Dorsolateral prefrontal cortex (tissue), 120 donors: ENCODE measurements at regions of chr1 and their contacts with region 1.

Region 1: GRCh38 chr1:212070720-212071302 is 35.3 kb downstream of the DTL start:
- DNase-seq: no peak
- H3K4me3 ChIP-seq: no peak overlapping the region
- H3K27ac ChIP-seq: no peak overlapping the region
- H3K27me3 ChIP-seq: no peaks in the 10 kb centered on the region
- CTCF ChIP-seq: peak; percentile 67 to 96 (median 82)

Region 2: DNA sequence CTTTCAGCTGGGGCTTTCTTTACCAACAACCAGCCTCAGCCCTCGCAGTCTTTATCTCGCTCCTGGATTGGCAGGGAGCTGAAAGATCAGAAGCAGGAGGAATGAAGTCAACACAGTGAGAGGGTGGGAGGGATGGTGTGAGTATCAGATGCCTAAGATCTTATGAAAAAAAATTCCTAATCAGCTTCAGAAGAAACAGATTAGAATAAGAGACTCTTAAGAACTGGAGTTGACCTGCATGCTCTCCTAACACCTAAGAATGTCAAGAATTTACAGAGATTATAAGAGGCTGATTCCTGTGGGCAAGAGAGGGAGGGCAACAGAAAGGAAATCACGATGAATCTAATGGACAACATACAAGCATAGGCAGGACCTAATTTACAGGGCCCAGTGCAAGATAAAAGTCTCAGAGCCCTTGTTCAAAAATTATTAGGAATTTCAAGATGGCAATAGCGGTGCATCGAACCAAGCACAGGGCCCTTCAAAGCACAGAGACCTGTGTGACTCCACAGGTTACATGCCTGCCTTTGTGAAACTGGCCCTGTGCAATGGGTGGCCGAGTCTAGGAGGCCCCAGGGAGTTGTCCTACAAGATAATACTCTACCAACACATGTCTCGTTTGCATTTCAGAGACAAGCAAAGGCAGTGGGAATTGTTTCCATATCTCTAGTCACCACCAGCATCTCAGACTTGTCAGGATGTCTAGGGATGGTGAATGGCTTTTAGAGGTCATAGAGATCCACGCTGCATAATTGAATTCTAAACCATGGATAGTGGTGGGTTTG is 149.1 kb after region 1 on chr1:
- intact Hi-C with region 1: no loop called
- DNase-seq: no peak
- H3K4me3 ChIP-seq: no peak overlapping the region
- H3K27ac ChIP-seq: no peak overlapping the region
- H3K27me3 ChIP-seq: no peaks in the 10 kb centered on the region
- CTCF ChIP-seq: no peak

Region 3: GRCh38 chr1:212291505-212292134 is 220.8 kb after region 1 on chr1:
- intact Hi-C with region 1: loop called (anchors 5 kb)
- DNase-seq: no peak
- H3K4me3 ChIP-seq: peak overlapping the region in 10 of 59 donors; percentile 0 to 28 (median 10)
- H3K27ac ChIP-seq: peak overlapping the region in 7 of 59 donors; percentile 1 to 44 (median 13)
- H3K27me3 ChIP-seq: no peaks in the 10 kb centered on the region
- CTCF ChIP-seq: peak in 55 of 56 donors; percentile 11 to 74 (median 53)

Region 4: DNA sequence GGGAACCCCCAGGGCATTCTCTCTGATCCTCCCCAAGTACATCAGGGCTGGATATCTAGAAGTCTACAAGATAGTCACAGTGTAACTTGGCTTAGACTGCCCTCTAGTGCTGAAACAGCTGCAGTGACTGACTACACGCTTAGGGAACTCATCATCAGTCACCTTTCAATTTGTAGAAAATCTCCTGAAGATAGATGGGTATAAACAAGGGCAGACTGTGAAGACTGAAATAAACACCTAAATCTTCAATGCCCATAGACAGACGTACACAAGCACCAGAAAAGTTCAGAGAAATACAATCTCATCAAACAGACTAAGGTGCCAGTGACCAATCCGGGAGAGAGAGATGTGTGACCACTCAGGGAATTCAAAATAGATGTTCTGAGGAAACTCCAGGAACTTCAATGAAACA is 297.3 kb after region 1 on chr1:
- intact Hi-C with region 1: loop called (anchors 5 to 10 kb)
- DNase-seq: peak in 2 of 10 donors; percentile 43 to 61
- H3K4me3 ChIP-seq: no peak overlapping the region
- H3K27ac ChIP-seq: peak overlapping the region in 5 of 59 donors; percentile 0 to 45 (median 32)
- H3K27me3 ChIP-seq: no peaks in the 10 kb centered on the region
- CTCF ChIP-seq: peak; percentile 25 to 83 (median 68)

Region 5: GRCh38 chr1:212558693-212559480 is 488.1 kb after region 1 on chr1:
- intact Hi-C with region 1: no loop called
- DNase-seq: peak; percentile 84 to 92 (median 90)
- H3K4me3 ChIP-seq: peak overlapping the region; percentile 55 to 97 (median 79)
- H3K27ac ChIP-seq: peak overlapping the region; percentile 63 to 98 (median 93)
- H3K27me3 ChIP-seq: no peaks in the 10 kb centered on the region
- CTCF ChIP-seq: peak in 2 of 56 donors; percentile 18 to 36

Region 6: DNA sequence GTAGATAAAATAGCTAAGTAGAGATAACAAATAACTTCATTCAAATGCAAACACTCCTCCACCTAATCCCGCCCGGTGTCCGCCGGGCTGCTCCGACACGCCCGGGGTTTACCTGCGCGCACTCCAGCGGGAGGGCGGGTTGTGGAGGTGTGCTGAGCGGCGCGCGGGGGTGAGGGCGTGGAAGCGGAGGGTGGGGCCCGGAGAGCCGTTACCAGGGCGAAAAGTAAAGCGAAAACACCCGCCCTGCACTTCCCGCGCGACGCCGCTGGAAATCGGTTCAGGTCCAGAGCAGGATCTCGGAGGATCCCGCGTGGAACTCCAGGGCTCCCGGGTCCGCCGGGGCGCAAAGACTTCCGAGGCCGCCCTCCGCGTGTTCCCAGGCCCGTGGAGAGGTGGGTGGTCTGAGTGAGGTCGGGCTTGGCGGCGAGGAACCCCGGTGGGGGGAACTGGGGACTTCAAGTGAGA is 536.0 kb after region 1 on chr1:
- intact Hi-C with region 1: no loop called
- DNase-seq: peak in 2 of 10 donors; percentile 24 to 42
- H3K4me3 ChIP-seq: peak overlapping the region; percentile 49 to 90 (median 79)
- H3K27ac ChIP-seq: peak overlapping the region in 6 of 59 donors; percentile 10 to 94 (median 87)
- H3K27me3 ChIP-seq: peaks cover 0 to 34% (median 3%) of the 10 kb centered on the region in 45 donors
- CTCF ChIP-seq: no peak